ENCODE measurements at regions of chr15 and their contacts with region 1.

Region 1: DNA sequence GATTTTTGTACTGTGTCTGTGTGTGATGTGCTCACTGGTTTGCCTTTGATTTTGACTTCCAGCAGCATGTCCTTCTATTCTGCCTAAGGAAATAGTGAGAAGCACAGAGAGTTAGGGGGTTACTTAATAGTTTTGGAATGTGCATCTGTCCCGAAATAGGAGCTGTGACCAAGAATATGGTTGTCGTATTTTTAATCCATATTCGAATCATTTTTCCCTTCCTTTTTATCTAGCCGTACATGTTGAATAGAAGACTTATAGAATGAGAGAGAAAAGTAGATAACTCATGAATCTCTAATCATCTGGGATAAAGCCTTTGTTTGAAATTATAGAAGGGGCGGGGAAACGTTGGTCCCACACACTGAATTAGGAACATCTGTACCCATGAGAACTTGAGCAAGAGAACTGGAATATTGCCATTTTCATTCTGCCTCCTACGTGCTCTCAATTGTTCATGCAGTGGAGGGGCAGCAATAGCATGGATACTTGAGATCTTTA is 23.6 kb downstream of the CRTC3 start:
- DNase-seq: no peak
- H3K4me3 ChIP-seq: no peak overlapping the region
- H3K27ac ChIP-seq: no peak overlapping the region
- H3K4me1 ChIP-seq: peaks cover 16% of the 10 kb centered on the region
- H3K27me3 ChIP-seq: no peaks in the 10 kb centered on the region
- CTCF ChIP-seq: no peak

Region 2: GRCh38 chr15:90512981-90513380 is 40.3 kb before region 1 on chr15:
- CTCF ChIA-PET with region 1: no interaction called
- dilution Hi-C with region 1: loop called (anchors 5 kb)
- in situ Hi-C with region 1: no loop called
- intact Hi-C with region 1: no loop called
- DNase-seq: no peak
- H3K4me3 ChIP-seq: no peak overlapping the region
- H3K27ac ChIP-seq: no peak overlapping the region
- H3K4me1 ChIP-seq: no peaks in the 10 kb centered on the region
- H3K27me3 ChIP-seq: no peaks in the 10 kb centered on the region
- CTCF ChIP-seq: no peak

Region 3: GRCh38 chr15:90529371-90530249 is 23.7 kb before region 1 on chr15 and contains the start of gene CRTC3:
- CTCF ChIA-PET with region 1: no interaction called
- dilution Hi-C with region 1: no loop called
- in situ Hi-C with region 1: no loop called
- intact Hi-C with region 1: loop called (anchors 2 kb)
- DNase-seq: peak; percentile 35
- H3K4me3 ChIP-seq: peak within 1 kb of the TSS; percentile 61 to 89 (median 67)
- H3K27ac ChIP-seq: peak within 1 kb of the TSS; percentile 35
- H3K4me1 ChIP-seq: peaks cover 10% of the 10 kb centered on the region
- H3K27me3 ChIP-seq: no peaks in the 10 kb centered on the region
- CTCF ChIP-seq: no peak
- total RNA-seq, gene CRTC3: 14.0 to 21.8 TPM